Naive thymus-derived CD4-positive, alpha-beta T cell (primary cell): ENCODE measurements at regions of chr9 and their contacts with region 1.

Region 1: GRCh38 chr9:71768388-71769174 is at the start of gene CEMIP2:
- DNase-seq: peak; percentile 86 to 93 (median 89)
- ATAC-seq: peak; percentile 91
- H3K4me3 ChIP-seq: peak within 1 kb of the TSS; percentile 91
- H3K4me3 Mint-ChIP-seq: peak within 1 kb of the TSS; percentile 93 to 99 (median 96)
- H3K27ac ChIP-seq: peak within 1 kb of the TSS; percentile 95
- H3K27ac Mint-ChIP-seq: peak within 1 kb of the TSS; percentile 93 to 98 (median 97)
- H3K4me1 ChIP-seq: peaks cover 18 to 33% of the 10 kb centered on the region in 2 donors
- H3K4me1 Mint-ChIP-seq: peaks cover 28 to 45% (median 39%) of the 10 kb centered on the region in 7 donors
- H3K27me3 ChIP-seq: no peaks in the 10 kb centered on the region
- H3K27me3 Mint-ChIP-seq: no peaks in the 10 kb centered on the region
- total RNA-seq, gene CEMIP2: 69.5 to 183 (median 103) TPM

Region 2: DNA sequence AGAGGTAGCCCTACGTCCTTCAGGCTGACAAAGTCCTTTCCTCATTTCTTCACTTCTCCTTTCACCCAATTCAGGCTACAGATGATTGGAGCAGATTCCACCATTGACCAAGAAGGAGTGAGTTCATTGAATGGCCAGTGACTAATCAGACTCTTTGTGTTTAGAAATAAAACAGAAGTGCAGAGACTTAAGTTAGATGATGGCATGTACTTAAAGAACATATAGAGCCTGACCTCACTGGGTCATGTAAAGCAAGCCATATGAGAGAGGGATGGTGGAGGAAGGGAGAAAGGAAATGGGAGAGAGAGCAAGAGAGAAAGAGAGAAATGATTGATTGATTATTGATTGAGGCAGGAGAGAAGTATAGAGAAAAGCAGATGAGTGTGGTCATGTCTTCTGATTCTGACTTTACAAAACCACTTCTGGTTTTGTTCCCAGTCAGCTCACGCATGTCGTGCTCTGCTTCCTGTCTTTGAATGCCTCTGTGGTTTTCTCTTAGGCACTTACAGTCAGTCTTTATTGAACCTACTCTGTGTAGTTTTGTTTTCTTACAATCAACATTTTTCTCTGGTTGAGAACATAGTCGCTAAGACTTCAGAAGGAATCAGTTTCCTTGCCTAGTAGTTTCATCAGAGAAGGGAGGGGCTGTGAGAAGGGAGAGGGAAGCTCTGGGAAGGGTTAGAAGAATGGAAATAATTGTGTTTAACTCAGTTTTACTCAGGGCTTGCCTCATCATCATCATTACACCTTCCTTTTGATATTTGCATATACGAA is 1205.0 kb before region 1 on chr9:
- CTCF ChIA-PET with region 1: no interaction called
- POLR2A ChIA-PET with region 1: no interaction called
- intact Hi-C with region 1: loop called in 1 of 2 experiments (anchors 10 kb)
- DNase-seq: peak in 8 of 9 donors; percentile 45 to 86 (median 78)
- ATAC-seq: peak; percentile 93
- H3K4me3 ChIP-seq: peak overlapping the region; percentile 15
- H3K4me3 Mint-ChIP-seq: peak overlapping the region; percentile 45 to 85 (median 68)
- H3K27ac ChIP-seq: peak overlapping the region; percentile 67
- H3K27ac Mint-ChIP-seq: peak overlapping the region; percentile 85 to 98 (median 95)
- H3K4me1 ChIP-seq: peaks cover 17 to 34% of the 10 kb centered on the region in 2 donors
- H3K4me1 Mint-ChIP-seq: peaks cover 33 to 66% (median 53%) of the 10 kb centered on the region in 7 donors
- H3K27me3 ChIP-seq: no peaks in the 10 kb centered on the region
- H3K27me3 Mint-ChIP-seq: no peaks in the 10 kb centered on the region

Region 3: GRCh38 chr9:71628247-71628646 is 140.3 kb before region 1 on chr9:
- CTCF ChIA-PET with region 1: no interaction called
- POLR2A ChIA-PET with region 1: interaction called, 3 read pairs
- intact Hi-C with region 1: loop called (anchors 1 kb)
- DNase-seq: peak in 1 of 9 donors; percentile 29
- ATAC-seq: peak; percentile 57
- H3K4me3 ChIP-seq: no peak overlapping the region
- H3K4me3 Mint-ChIP-seq: no peak overlapping the region
- H3K27ac ChIP-seq: no peak overlapping the region
- H3K27ac Mint-ChIP-seq: no peak overlapping the region
- H3K4me1 ChIP-seq: no peaks in the 10 kb centered on the region
- H3K4me1 Mint-ChIP-seq: peaks cover 0 to 33% (median 0%) of the 10 kb centered on the region in 7 donors
- H3K27me3 ChIP-seq: no peaks in the 10 kb centered on the region
- H3K27me3 Mint-ChIP-seq: peaks cover 0 to 27% (median 0%) of the 10 kb centered on the region in 5 donors

Region 4: DNA sequence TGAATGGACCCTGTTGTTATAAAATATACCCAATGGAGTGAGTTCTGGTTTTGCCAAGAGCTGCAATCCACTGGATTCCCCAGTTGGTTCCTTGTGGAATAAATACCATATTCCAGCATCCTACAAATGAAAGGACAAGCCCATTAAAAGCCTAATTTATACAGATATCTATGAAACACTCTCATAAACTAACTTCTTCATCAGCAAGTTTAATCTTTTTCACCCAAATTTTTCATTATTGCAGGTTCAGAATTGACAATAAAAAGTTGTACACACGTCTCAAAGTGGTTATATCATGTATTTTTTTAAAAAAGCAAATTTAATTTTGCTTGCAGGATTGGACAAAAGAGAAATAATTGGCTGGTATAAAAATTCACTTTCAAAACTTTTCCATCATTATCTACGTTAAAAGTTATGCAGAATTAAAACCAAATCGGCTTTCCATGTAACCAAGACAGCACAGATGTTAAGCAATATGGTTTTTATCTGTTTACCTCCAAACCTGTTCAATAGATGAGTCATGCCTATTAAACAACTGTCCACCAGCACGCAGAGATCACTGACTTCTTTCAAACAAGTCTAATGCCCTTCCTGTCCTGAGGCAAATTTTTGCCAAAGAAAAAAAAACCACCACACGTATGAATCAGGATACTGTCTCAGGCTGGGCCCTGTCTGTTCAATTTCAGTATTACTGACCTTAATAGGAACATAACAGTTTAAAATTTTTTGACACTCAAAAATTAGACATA is 42.8 kb before region 1 on chr9:
- CTCF ChIA-PET with region 1: interaction called, 3 read pairs
- POLR2A ChIA-PET with region 1: interaction called, 4 read pairs
- intact Hi-C with region 1: loop called (anchors 2 to 5 kb)
- DNase-seq: no peak
- ATAC-seq: no peak
- H3K4me3 ChIP-seq: no peak overlapping the region
- H3K4me3 Mint-ChIP-seq: no peak overlapping the region
- H3K27ac ChIP-seq: no peak overlapping the region
- H3K27ac Mint-ChIP-seq: peak overlapping the region in 1 of 9 donors; percentile 18
- H3K4me1 ChIP-seq: no peaks in the 10 kb centered on the region
- H3K4me1 Mint-ChIP-seq: peaks cover 0 to 15% (median 11%) of the 10 kb centered on the region in 7 donors
- H3K27me3 ChIP-seq: no peaks in the 10 kb centered on the region
- H3K27me3 Mint-ChIP-seq: no peaks in the 10 kb centered on the region

Region 5: GRCh38 chr9:71795097-71795813 is 26.7 kb after region 1 on chr9:
- CTCF ChIA-PET with region 1: interaction called, 5 read pairs
- POLR2A ChIA-PET with region 1: interaction called, 70 read pairs
- intact Hi-C with region 1: loop called (anchors 1 kb)
- DNase-seq: peak in 7 of 9 donors; percentile 68 to 90 (median 85)
- ATAC-seq: peak; percentile 92
- H3K4me3 ChIP-seq: peak overlapping the region; percentile 17
- H3K4me3 Mint-ChIP-seq: peak overlapping the region; percentile 26 to 90 (median 76)
- H3K27ac ChIP-seq: peak overlapping the region; percentile 71
- H3K27ac Mint-ChIP-seq: peak overlapping the region; percentile 91 to 99 (median 96)
- H3K4me1 ChIP-seq: peaks cover 36 to 63% of the 10 kb centered on the region in 2 donors
- H3K4me1 Mint-ChIP-seq: peaks cover 44 to 87% (median 76%) of the 10 kb centered on the region in 7 donors
- H3K27me3 ChIP-seq: no peaks in the 10 kb centered on the region
- H3K27me3 Mint-ChIP-seq: no peaks in the 10 kb centered on the region

Region 6: DNA sequence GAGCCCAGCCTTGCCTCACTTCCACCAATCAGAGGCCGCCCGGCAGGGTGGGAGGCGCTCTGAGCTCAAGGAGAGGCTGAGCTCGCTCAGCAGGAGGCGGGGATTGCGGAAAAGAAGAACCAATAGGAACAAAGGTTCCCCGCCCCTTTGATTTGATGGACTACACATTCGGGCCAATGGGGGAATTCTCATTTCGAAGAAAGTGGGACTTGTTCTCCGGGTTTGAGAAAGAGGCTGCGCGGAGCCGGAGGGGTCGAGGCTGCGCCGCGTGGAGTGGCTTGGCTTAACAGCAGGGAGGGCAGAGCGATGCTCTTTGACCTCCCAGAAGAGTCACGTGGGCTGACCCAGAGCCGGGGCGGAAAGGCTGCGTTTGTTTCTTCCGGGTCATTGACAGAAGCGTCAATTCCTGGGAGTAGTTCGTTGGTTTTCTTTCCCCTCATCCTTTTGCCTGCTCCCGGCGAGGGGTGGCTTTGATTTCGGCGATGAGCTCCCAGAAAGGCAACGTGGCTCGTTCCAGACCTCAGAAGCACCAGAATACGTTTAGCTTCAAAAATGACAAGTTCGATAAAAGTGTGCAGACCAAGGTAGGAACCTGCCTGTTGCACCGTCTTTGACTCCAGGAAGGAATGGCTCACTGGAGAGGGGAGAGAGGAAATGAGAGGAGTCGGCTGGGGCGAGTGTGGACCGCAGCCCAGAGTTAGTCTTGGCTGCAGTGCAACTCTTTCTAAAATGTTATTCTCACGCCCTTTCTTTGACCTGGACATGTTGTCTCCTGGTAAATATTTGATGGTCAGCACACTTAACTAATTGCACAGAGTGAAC is 142.9 kb after region 1 on chr9 and contains the start of gene C9orf85:
- CTCF ChIA-PET with region 1: no interaction called
- POLR2A ChIA-PET with region 1: interaction called, 9 read pairs
- intact Hi-C with region 1: loop called (anchors 1 kb)
- DNase-seq: peak; percentile 84 to 98 (median 95)
- ATAC-seq: peak; percentile 96
- H3K4me3 ChIP-seq: peak within 1 kb of the TSS; percentile 83
- H3K4me3 Mint-ChIP-seq: peak within 1 kb of the TSS; percentile 95 to 100 (median 100)
- H3K27ac ChIP-seq: peak within 1 kb of the TSS; percentile 74
- H3K27ac Mint-ChIP-seq: peak within 1 kb of the TSS; percentile 90 to 99 (median 95)
- H3K4me1 ChIP-seq: peaks cover 15 to 22% of the 10 kb centered on the region in 2 donors
- H3K4me1 Mint-ChIP-seq: peaks cover 47 to 80% (median 67%) of the 10 kb centered on the region in 7 donors
- H3K27me3 ChIP-seq: peaks cover 0 to 3% of the 10 kb centered on the region in 2 donors
- H3K27me3 Mint-ChIP-seq: no peaks in the 10 kb centered on the region
- total RNA-seq, gene C9orf85: 4.8 to 10.3 (median 8.6) TPM

Region 7: GRCh38 chr9:72526901-72527800 is 758.6 kb after region 1 on chr9:
- CTCF ChIA-PET with region 1: no interaction called
- POLR2A ChIA-PET with region 1: no interaction called
- intact Hi-C with region 1: loop called (anchors 10 kb)
- DNase-seq: peak; percentile 24 to 81 (median 63)
- ATAC-seq: peak; percentile 90
- H3K4me3 ChIP-seq: peak overlapping the region; percentile 28
- H3K4me3 Mint-ChIP-seq: peak overlapping the region; percentile 83 to 94 (median 88)
- H3K27ac ChIP-seq: peak overlapping the region; percentile 65
- H3K27ac Mint-ChIP-seq: peak overlapping the region; percentile 85 to 98 (median 92)
- H3K4me1 ChIP-seq: peaks cover 13 to 15% of the 10 kb centered on the region in 2 donors
- H3K4me1 Mint-ChIP-seq: peaks cover 11 to 56% (median 28%) of the 10 kb centered on the region in 7 donors
- H3K27me3 ChIP-seq: no peaks in the 10 kb centered on the region
- H3K27me3 Mint-ChIP-seq: no peaks in the 10 kb centered on the region